ENCODE measurements at regions of chr10 and their contacts with region 1.

Region 1: GRCh38 chr10:96395931-96396877 is 37.4 kb upstream of the OPALIN start:
- DNase-seq: peak; percentile 79 to 91 (median 86)
- H3K4me3 ChIP-seq: no peak overlapping the region
- H3K27ac ChIP-seq: no peak overlapping the region
- H3K4me1 ChIP-seq: peaks cover 0 to 3% (median 0%) of the 10 kb centered on the region in 4 experiments
- H3K27me3 ChIP-seq: peaks cover 0 to 31% (median 15%) of the 10 kb centered on the region in 5 experiments

Region 2: DNA sequence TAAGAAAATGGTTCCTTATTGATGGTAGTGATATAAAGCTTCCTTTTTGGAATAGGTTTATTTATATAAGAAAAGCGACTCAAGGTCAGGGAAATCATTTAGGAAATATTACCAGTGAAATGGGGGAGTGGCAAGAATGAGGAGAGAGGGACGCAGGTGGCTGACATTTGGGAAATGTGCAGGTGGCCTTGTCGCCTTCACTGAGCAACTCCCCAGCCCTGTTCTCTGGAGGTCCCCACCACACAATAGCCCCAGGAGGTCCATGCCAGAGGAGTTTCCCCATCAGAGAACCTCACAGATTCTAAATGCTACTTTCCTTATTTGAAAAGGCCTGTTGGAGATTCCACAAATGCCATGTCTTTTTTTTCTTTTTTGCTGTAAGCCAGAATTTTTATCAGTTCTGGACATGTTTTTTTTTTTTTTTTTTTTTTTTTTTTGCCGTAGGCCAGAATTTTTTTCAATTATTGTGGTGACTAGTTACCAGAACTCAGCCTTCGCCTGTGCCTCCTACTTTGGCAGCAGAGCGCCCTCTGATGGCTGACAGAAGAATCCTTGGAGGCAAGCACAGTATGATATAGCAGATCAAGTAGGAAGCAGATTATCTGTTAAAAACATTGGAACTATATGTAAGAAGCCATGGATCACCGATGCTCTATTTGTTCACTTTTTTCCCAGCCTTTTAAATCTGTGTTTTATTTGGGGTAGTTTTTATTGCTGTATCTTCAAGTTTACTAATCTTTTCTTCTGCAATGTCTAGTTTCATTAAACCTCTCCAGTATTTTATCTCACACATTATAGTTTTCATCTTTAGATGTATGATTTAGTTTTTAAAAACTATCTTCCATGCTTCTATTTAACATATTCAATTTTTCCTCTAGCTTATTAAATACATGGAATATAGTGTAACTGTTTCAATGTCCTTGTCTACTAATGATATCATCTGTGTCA is 56.0 kb before region 1 on chr10:
- CTCF ChIA-PET with region 1: no interaction called
- POLR2A ChIA-PET with region 1: no interaction called
- DNase-seq: peak; percentile 90 to 94 (median 93)
- H3K4me3 ChIP-seq: no peak overlapping the region
- H3K27ac ChIP-seq: no peak overlapping the region
- H3K4me1 ChIP-seq: peaks cover 0 to 22% (median 5%) of the 10 kb centered on the region in 4 experiments
- H3K27me3 ChIP-seq: no peaks in the 10 kb centered on the region

Region 3: GRCh38 chr10:96384501-96384900 is 11.7 kb before region 1 on chr10:
- CTCF ChIA-PET with region 1: interaction called, 22 read pairs
- POLR2A ChIA-PET with region 1: no interaction called
- DNase-seq: no peak
- H3K4me3 ChIP-seq: no peak overlapping the region
- H3K27ac ChIP-seq: no peak overlapping the region
- H3K4me1 ChIP-seq: no peaks in the 10 kb centered on the region
- H3K27me3 ChIP-seq: peaks cover 0 to 9% (median 2%) of the 10 kb centered on the region in 5 experiments

Region 4: GRCh38 chr10:96413151-96413787 is 17.1 kb after region 1 on chr10:
- CTCF ChIA-PET with region 1: interaction called, 10 read pairs
- POLR2A ChIA-PET with region 1: no interaction called
- DNase-seq: no peak
- H3K4me3 ChIP-seq: no peak overlapping the region
- H3K27ac ChIP-seq: no peak overlapping the region
- H3K4me1 ChIP-seq: peaks cover 3 to 16% (median 15%) of the 10 kb centered on the region in 4 experiments
- H3K27me3 ChIP-seq: peaks cover 0 to 21% (median 6%) of the 10 kb centered on the region in 5 experiments

Region 5: GRCh38 chr10:96577069-96577468 is 180.9 kb after region 1 on chr10:
- CTCF ChIA-PET with region 1: no interaction called
- POLR2A ChIA-PET with region 1: no interaction called
- DNase-seq: no peak
- H3K4me3 ChIP-seq: no peak overlapping the region
- H3K27ac ChIP-seq: no peak overlapping the region
- H3K4me1 ChIP-seq: peaks cover 0 to 8% (median 4%) of the 10 kb centered on the region in 4 experiments
- H3K27me3 ChIP-seq: no peaks in the 10 kb centered on the region